HepG2 (cell line): ENCODE measurements at regions of chr20 and their contacts with region 1.

Region 1: GRCh38 chr20:22430154-22430745 is 154.1 kb downstream of the FOXA2 start:
- DNase-seq: peak; percentile 92
- ATAC-seq: peak; percentile 67
- H3K4me3 ChIP-seq: peak overlapping the region; percentile 45 to 67 (median 67)
- H3K27ac ChIP-seq: peak overlapping the region; percentile 96
- H3K4me1 ChIP-seq: peaks cover 75% of the 10 kb centered on the region
- H3K27me3 ChIP-seq: no peaks in the 10 kb centered on the region; a peak in 1 of 5 replicates
- CTCF ChIP-seq: no peak
- EP300 ChIP-seq: peak; percentile 44 to 54; a peak in 3 of 4 replicates
- POLR2A ChIP-seq: peak; percentile 18 to 69
- RAD21 ChIP-seq: no peak

Region 2: DNA sequence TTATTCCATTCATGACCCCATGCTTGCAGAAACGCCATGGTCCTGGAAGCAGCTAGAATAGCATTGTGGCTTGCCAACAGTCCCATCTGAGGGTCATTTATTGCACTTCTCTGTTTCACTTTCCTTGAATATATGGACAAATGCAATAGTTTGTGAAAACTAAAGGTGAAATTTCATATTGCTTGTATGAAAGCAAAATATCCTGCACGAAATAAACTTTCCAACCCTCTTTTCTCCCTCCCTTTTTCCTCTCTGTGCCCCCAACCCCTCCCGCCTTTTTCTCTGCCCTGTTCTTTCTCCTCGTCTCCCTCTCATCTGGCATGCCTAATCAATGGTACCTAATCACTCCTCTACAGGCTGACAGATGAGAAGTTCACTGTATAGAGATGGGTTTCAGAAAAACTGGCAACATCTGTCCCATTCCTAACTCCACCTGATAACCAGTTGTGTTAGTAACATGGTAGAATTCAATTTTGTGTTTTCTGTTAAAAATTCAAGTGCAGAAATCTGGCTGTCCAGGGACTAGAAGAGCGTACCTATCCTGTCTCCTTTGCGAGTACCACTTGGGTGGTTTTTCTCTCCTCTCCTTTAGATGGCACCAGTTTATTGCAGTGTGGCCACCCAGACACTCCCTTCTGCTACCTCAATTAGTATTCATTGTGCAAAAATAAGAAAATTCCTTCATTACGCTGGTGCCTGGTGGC is 44.5 kb before region 1 on chr20:
- CTCF ChIA-PET with region 1: no interaction called
- POLR2A ChIA-PET with region 1: interaction called, 4 read pairs
- in situ Hi-C with region 1: no loop called
- intact Hi-C with region 1: loop called (anchors 1 kb)
- DNase-seq: peak; percentile 75
- ATAC-seq: peak; percentile 94
- H3K4me3 ChIP-seq: no peak overlapping the region
- H3K27ac ChIP-seq: no peak overlapping the region
- H3K4me1 ChIP-seq: peaks cover 17% of the 10 kb centered on the region
- H3K27me3 ChIP-seq: peaks cover 0 to 45% of the 10 kb centered on the region in 2 experiments; a peak in 3 of 5 replicates
- CTCF ChIP-seq: peak; percentile 92
- EP300 ChIP-seq: no peak
- POLR2A ChIP-seq: no peak
- RAD21 ChIP-seq: peak; percentile 95

Region 3: DNA sequence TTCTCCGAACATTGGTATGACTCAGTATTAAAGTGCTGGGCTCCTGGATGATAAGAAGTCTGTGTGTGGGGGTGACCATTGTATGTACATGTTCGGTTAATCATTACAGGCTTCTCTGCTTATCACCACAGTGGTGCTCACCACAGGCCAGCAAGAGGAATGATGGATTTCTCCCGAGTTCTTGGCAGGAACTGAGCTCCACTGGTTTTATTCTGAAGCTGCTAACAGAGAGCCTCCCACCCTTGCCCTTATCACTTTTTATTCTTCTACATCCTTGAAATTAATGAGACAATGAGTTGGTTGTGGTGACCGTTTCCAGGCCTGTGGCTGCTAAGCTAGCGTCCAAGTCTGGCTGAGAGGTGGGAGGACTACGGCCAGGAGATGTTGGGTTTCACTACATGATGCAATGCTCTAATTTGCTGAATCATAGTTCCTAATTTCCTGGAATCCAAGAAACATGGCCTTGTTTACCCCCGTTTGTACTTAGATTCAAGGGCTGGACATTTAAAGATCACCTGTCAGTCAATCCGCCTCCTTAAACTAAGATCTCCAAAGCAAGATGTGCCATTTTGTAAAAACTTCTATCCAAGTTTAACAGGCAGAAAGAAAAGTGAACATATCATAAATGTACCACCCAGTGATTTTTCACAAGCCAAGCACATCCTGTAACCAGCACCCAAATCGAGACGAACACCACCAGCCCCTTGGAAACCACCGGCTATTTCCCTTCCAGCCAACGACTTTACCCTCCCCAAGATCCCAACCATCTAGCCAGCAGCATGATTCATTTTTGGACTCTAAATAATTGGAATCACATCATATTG is 18.4 kb before region 1 on chr20:
- CTCF ChIA-PET with region 1: interaction called, 3 read pairs
- POLR2A ChIA-PET with region 1: interaction called, 55 read pairs
- in situ Hi-C with region 1: no loop called
- intact Hi-C with region 1: loop called (anchors 1 kb)
- DNase-seq: peak; percentile 96
- ATAC-seq: peak; percentile 100
- H3K4me3 ChIP-seq: peak overlapping the region; percentile 17 to 56 (median 20); a peak in 4 of 6 replicates
- H3K27ac ChIP-seq: peak overlapping the region; percentile 77
- H3K4me1 ChIP-seq: peaks cover 57% of the 10 kb centered on the region
- H3K27me3 ChIP-seq: no peaks in the 10 kb centered on the region; a peak in 1 of 5 replicates
- CTCF ChIP-seq: 0 out of 2 replicates have a peak, but pooled peaks have one; percentile 4
- EP300 ChIP-seq: peak; percentile 51 to 89; a peak in 3 of 4 replicates
- POLR2A ChIP-seq: peak; percentile 69 to 73
- RAD21 ChIP-seq: no peak

Region 4: DNA sequence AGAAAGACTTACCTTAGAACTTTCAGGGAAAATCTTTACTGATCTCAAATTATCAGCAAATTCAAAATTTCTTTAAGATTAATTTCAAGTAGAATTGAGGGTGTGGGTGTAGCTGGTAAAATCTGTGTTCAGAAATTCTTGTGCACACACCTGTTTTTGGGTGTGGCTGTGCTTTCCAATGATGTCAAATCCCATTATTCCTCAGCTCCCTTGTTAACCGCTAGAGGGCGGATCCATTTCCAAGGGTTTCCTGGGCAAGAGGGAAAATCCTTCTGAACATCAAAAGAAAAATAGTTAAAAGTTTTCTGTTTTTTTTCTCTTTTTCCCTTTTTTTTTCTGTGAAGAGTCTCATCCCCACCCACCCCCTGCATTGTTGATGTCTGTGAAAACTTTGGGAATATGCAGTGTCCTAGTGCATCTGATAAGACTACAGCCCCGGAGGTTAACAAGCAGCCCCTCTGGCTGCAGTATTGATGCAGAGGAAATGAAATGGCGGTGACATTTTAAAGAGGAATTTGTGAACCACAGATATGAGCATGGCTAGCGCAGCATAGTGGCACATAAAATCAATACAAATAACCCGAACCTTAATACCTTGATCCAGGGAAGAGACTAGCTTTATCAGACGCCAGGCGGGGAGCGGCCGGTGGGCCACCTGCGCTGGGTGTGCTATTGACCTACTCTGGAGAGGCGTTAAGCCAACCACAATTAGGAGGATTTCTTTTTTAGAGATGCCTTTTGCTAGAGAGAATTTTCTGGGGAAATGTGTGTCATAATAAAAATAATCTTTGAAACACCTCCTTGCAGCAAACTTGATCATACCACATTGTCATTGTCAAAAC is 23.2 kb after region 1 on chr20:
- CTCF ChIA-PET with region 1: no interaction called
- POLR2A ChIA-PET with region 1: interaction called, 25 read pairs
- in situ Hi-C with region 1: no loop called
- intact Hi-C with region 1: loop called (anchors 2 kb)
- DNase-seq: peak; percentile 70
- ATAC-seq: peak; percentile 60; the same call in 2 of the 3 replicates
- H3K4me3 ChIP-seq: no peak overlapping the region
- H3K27ac ChIP-seq: no peak overlapping the region
- H3K4me1 ChIP-seq: peaks cover 27% of the 10 kb centered on the region
- H3K27me3 ChIP-seq: peaks cover 6 to 60% of the 10 kb centered on the region in 2 experiments
- CTCF ChIP-seq: peak; percentile 86
- EP300 ChIP-seq: no peak
- POLR2A ChIP-seq: no peak
- RAD21 ChIP-seq: peak; percentile 80

Region 5: DNA sequence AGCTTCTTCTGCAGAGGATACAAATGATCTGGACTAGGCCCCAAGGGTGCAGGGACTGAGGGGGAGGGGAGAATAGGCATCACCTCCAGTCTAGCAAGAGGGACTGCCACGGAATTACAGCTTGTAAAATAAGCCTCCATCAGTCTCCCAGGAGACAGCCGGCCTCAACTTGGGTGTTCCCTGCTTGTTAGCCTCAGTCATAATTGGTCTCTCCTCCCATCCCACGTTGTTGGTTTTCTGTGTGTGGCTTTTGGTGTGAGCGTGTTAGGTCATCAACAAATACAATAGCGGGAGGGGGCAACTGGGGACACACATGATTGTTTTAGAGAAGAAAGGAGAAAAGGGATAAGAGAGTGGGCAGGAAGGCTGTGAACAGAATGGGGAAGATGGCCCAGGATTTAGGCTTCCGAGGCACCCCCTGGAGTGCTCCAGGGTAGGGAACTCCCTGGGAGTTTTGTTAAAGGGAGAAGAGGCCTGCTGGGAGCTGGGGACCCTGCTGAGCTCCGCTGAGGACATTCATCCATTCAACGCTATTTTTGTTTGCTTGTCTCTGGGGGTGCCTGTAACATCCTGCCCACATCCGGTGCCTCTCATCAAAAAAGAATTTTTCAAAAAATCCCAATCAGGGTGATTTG is 145.0 kb after region 1 on chr20:
- CTCF ChIA-PET with region 1: no interaction called
- POLR2A ChIA-PET with region 1: interaction called, 15 read pairs
- in situ Hi-C with region 1: no loop called
- intact Hi-C with region 1: no loop called
- DNase-seq: peak; percentile 23
- ATAC-seq: no peak
- H3K4me3 ChIP-seq: peak overlapping the region in 2 of 3 experiments; percentile 32 to 95; a peak in 2 of 6 replicates
- H3K27ac ChIP-seq: peak overlapping the region; percentile 86
- H3K4me1 ChIP-seq: peaks cover 85% of the 10 kb centered on the region
- H3K27me3 ChIP-seq: no peaks in the 10 kb centered on the region; a peak in 1 of 5 replicates
- CTCF ChIP-seq: no peak
- EP300 ChIP-seq: no peak
- POLR2A ChIP-seq: no peak
- RAD21 ChIP-seq: no peak